PC-9 (cell line): ENCODE measurements at regions of chr10 and their contacts with region 1.

Region 1: GRCh38 chr10:103877861-103878260 is 22.5 kb upstream of the SH3PXD2A start:
- DNase-seq: no peak
- H3K4me3 ChIP-seq: no peak overlapping the region
- H3K27ac ChIP-seq: no peak overlapping the region
- H3K4me1 ChIP-seq: peaks cover 5% of the 10 kb centered on the region; the same call in 1 of the 2 replicates
- H3K27me3 ChIP-seq: no peaks in the 10 kb centered on the region
- CTCF ChIP-seq: no peak

Region 2: DNA sequence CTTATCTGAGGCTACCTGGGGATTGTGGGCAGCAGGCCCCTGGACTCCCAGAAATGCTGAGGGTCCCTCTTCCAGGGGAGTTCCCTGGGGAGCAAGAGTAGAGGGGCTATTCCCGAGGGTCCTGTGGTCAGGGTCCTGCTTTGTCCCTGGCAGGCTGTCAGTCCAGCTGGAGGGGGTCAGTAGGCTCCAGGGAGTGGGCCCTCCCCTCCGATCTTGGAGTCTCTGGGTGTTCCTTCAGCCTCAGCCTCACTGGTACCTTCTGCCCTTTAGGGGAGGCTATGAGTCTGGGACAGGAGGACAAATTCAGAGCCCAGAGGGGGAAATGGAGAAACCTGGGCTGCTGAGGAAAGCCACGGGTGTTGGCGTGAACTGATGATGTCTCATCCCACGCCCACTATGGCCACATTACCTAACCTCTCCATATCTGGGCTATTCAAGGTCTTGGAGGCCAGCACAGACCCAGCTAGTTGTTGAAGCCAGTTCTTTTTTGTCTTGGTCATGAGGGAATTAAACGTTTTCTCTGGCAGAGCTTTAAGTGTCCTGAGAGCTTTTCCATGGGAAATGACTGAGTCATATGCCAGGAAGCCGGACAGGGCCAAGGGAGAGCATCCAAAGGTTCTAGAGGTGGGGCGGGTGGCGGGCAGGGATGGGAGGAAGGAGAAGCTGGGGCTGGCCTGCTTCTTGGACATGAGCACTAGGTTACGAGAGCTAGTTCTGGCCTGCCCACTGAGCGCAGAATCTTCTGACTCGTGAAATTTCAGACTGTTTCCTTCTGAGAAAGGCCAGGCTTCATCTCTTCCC is 431.9 kb before region 1 on chr10:
- CTCF ChIA-PET with region 1: no interaction called
- POLR2A ChIA-PET with region 1: no interaction called
- intact Hi-C with region 1: no loop called
- DNase-seq: no peak
- H3K4me3 ChIP-seq: no peak overlapping the region
- H3K27ac ChIP-seq: no peak overlapping the region
- H3K4me1 ChIP-seq: peaks cover 26% of the 10 kb centered on the region
- H3K27me3 ChIP-seq: no peaks in the 10 kb centered on the region
- CTCF ChIP-seq: no peak

Region 3: GRCh38 chr10:103759100-103759781 is 118.6 kb before region 1 on chr10:
- CTCF ChIA-PET with region 1: no interaction called
- POLR2A ChIA-PET with region 1: no interaction called
- intact Hi-C with region 1: no loop called
- DNase-seq: peak; percentile 28 to 71
- H3K4me3 ChIP-seq: no peak overlapping the region
- H3K27ac ChIP-seq: peak overlapping the region; percentile 84
- H3K4me1 ChIP-seq: peaks cover 80% of the 10 kb centered on the region
- H3K27me3 ChIP-seq: no peaks in the 10 kb centered on the region
- CTCF ChIP-seq: no peak

Region 4: DNA sequence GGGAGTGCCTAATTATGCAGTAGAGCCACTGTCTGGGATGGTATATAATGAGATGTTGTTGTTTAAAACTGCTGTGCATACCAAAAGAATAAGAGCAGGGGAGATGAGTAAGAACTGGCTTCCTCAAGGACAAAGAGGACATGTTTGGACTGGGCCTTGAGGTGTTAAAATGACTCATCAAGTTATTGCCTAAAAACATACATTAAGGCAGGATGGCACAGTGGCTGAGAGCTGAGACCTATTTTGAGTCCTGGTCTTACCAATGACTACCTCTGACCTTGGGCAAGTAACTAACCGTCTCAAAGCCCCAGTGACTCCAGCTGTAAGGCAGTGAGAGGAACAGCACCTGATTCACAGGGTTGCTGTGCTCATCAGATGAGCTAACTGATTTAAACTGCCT is 546.9 kb after region 1 on chr10:
- CTCF ChIA-PET with region 1: no interaction called
- POLR2A ChIA-PET with region 1: interaction called, 10 read pairs
- intact Hi-C with region 1: no loop called
- DNase-seq: no peak
- H3K4me3 ChIP-seq: no peak overlapping the region
- H3K27ac ChIP-seq: no peak overlapping the region
- H3K4me1 ChIP-seq: no peaks in the 10 kb centered on the region
- H3K27me3 ChIP-seq: peaks cover 10% of the 10 kb centered on the region
- CTCF ChIP-seq: no peak